OCI-LY7 (cell line): ENCODE measurements at regions of chr1 and their contacts with region 1.

Region 1: GRCh38 chr1:225845571-225846259 is 35.8 kb downstream of the EPHX1 start:
- DNase-seq: peak; percentile 74
- H3K4me3 ChIP-seq: no peak overlapping the region
- H3K27ac ChIP-seq: no peak overlapping the region
- H3K4me1 ChIP-seq: peaks cover 49% of the 10 kb centered on the region
- CTCF ChIP-seq: peak; percentile 83

Region 2: DNA sequence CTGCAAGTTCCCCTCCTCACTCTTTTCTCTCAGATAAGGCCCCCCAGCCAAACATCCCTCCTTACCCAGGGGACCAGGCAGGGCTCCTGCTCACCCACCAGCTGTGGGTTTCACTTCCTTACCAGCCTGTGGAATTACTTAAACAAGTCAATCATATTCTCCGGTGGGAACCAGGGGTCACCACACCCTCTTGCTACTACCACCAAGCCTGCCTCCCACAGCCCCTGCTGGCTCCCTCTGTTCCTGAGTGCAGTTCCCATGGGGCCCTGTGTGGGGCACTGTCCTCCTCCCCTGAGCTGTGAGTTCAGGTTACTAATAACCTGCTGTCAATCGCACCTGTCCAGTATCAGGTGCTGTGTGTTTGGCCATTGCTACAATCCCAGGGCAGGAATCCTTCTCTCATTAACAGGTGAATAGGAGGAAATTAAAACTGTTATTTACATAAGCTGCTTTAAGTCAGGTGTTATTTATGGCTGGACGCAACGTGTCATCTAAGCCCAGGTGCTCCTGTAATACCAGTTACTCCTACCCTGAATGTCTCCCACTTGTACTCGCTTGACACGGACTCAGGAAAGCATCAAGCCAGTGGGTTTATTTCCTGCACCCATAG is 364.8 kb before region 1 on chr1:
- CTCF ChIA-PET with region 1: interaction called, 3 read pairs
- POLR2A ChIA-PET with region 1: interaction called, 3 read pairs
- intact Hi-C with region 1: loop called (anchors 2 kb)
- DNase-seq: peak; percentile 92
- H3K4me3 ChIP-seq: peak overlapping the region; percentile 35
- H3K27ac ChIP-seq: peak overlapping the region; percentile 92
- H3K4me1 ChIP-seq: peaks cover 76% of the 10 kb centered on the region
- CTCF ChIP-seq: peak; percentile 97

Region 3: GRCh38 chr1:225554216-225554812 is 291.4 kb before region 1 on chr1:
- CTCF ChIA-PET with region 1: no interaction called
- POLR2A ChIA-PET with region 1: no interaction called
- intact Hi-C with region 1: loop called (anchors 1 kb)
- DNase-seq: peak; percentile 56
- H3K4me3 ChIP-seq: no peak overlapping the region
- H3K27ac ChIP-seq: no peak overlapping the region
- H3K4me1 ChIP-seq: no peaks in the 10 kb centered on the region
- CTCF ChIP-seq: peak; percentile 94

Region 4: GRCh38 chr1:225777583-225778336 is 68.0 kb before region 1 on chr1 and contains the start of gene SRP9:
- CTCF ChIA-PET with region 1: no interaction called
- POLR2A ChIA-PET with region 1: interaction called, 3 read pairs
- intact Hi-C with region 1: loop called (anchors 1 kb)
- DNase-seq: peak; percentile 100
- H3K4me3 ChIP-seq: peak within 1 kb of the TSS; percentile 78
- H3K27ac ChIP-seq: peak within 1 kb of the TSS; percentile 91
- H3K4me1 ChIP-seq: peaks cover 56% of the 10 kb centered on the region
- CTCF ChIP-seq: peak; percentile 91
- total RNA-seq, gene SRP9: 182 and 221 TPM in 2 replicates

Region 5: GRCh38 chr1:225881969-225882693 is 36.4 kb after region 1 on chr1 and contains the start of gene TMEM63A:
- CTCF ChIA-PET with region 1: no interaction called
- POLR2A ChIA-PET with region 1: no interaction called
- intact Hi-C with region 1: loop called (anchors 2 kb)
- DNase-seq: peak; percentile 86
- H3K4me3 ChIP-seq: peak within 1 kb of the TSS; percentile 83
- H3K27ac ChIP-seq: peak within 1 kb of the TSS; percentile 32
- H3K4me1 ChIP-seq: peaks cover 47% of the 10 kb centered on the region
- CTCF ChIP-seq: peak; percentile 47; the same call in 1 of the 2 replicates
- total RNA-seq, gene TMEM63A: 20.9 and 21.0 TPM in 2 replicates

Region 6: DNA sequence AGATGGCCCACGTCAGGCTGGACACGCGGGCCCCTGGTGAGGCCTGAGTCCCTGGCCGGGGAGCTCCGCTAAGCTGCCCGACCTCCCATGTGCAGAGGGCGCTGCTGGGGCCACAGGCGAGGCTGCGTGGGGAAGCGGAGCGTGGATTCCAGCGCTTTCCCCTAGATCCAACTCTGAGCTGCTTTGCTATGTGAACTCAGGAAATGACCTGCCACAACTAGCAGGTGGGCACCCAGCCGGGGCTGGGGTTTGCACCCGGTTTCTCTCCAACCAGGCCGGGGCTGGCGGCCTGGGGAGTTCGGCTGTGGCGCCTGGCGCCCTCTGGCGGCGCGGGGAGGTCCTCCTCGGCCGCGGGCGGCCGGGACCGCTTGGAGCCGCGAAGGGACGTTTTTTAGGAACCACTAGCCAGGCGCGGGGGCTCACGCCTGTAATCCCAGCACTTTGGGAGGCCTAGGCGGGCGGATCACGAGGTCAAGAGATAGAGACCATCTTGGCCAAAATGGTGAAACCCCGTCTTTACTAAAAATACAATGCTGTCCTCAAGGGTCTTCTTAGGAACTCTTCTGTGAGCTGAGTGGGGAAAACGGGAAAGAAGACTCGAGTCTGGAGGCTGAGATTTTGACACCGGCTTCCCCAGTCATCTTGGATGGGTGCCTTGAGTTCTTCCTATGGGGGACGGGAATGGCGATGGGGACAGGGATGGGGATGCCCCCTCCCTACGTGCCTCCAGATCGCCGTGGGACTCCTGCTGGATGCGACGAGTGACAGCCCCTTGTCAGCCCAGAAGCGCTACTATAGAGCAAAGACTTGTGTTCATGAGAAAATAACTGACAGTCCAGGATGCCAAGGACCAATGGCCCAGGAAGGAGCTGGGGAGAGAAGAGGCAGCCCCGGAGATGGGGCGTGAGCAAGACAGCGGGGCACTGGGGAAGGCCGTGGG is 65.7 kb after region 1 on chr1:
- CTCF ChIA-PET with region 1: no interaction called
- POLR2A ChIA-PET with region 1: no interaction called
- intact Hi-C with region 1: loop called (anchors 2 kb)
- DNase-seq: no peak
- H3K4me3 ChIP-seq: no peak overlapping the region
- H3K27ac ChIP-seq: no peak overlapping the region
- H3K4me1 ChIP-seq: peaks cover 25% of the 10 kb centered on the region
- CTCF ChIP-seq: peak; percentile 32; the same call in 1 of the 2 replicates

Region 7: GRCh38 chr1:225923692-225924555 is 78.2 kb after region 1 on chr1 and contains the start of gene PYCR2:
- CTCF ChIA-PET with region 1: interaction called, 4 read pairs
- POLR2A ChIA-PET with region 1: no interaction called
- intact Hi-C with region 1: loop called (anchors 1 kb)
- DNase-seq: peak; percentile 98
- H3K4me3 ChIP-seq: peak within 1 kb of the TSS; percentile 91
- H3K27ac ChIP-seq: peak within 1 kb of the TSS; percentile 81
- H3K4me1 ChIP-seq: peaks cover 65% of the 10 kb centered on the region
- CTCF ChIP-seq: no peak
- total RNA-seq, gene PYCR2: 120 and 136 TPM in 2 replicates

Region 8: DNA sequence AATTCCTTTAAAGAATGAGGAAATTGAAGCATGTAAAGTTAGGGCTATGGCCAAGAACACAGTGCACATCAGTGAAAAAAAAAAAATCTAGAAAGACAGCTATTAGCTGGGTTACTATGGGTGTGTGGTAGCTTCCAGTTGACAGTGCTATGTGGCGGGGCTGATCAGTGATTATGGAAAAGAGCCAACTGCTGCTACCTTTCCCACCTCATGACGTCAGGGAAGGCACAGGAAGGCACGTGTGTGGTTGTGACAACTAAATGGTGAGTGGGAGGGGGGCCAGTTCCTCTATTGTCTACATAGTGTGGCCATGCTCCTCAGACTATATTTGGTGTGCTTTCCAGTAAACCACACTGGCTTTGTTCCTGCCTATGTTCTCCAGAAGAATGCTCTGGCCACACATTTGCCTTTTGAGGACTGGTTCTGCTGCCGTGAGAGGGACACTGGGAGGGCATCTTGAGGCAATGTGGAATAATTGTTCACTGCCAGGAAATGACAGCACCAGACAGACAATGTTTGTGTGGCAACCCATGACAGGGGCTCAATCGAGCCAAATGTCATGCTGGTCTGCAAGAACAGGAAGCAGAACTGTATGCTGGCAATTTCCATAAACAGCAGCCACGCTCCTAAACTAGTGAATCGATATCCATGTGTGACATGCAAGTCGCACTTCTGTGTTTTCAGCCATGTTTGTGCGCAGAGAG is 156.4 kb after region 1 on chr1:
- CTCF ChIA-PET with region 1: no interaction called
- POLR2A ChIA-PET with region 1: no interaction called
- intact Hi-C with region 1: no loop called
- DNase-seq: peak; percentile 65
- H3K4me3 ChIP-seq: peak overlapping the region; percentile 3
- H3K27ac ChIP-seq: peak overlapping the region; percentile 40
- H3K4me1 ChIP-seq: peaks cover 51% of the 10 kb centered on the region
- CTCF ChIP-seq: no peak

Region 9: GRCh38 chr1:226019572-226019971 is 173.9 kb after region 1 on chr1:
- CTCF ChIA-PET with region 1: no interaction called
- POLR2A ChIA-PET with region 1: no interaction called
- intact Hi-C with region 1: no loop called
- DNase-seq: no peak
- H3K4me3 ChIP-seq: no peak overlapping the region
- H3K27ac ChIP-seq: no peak overlapping the region
- H3K4me1 ChIP-seq: no peaks in the 10 kb centered on the region
- CTCF ChIP-seq: no peak